SK-N-SH (cell line): ENCODE measurements at regions of chr17 and their contacts with region 1.

Region 1: DNA sequence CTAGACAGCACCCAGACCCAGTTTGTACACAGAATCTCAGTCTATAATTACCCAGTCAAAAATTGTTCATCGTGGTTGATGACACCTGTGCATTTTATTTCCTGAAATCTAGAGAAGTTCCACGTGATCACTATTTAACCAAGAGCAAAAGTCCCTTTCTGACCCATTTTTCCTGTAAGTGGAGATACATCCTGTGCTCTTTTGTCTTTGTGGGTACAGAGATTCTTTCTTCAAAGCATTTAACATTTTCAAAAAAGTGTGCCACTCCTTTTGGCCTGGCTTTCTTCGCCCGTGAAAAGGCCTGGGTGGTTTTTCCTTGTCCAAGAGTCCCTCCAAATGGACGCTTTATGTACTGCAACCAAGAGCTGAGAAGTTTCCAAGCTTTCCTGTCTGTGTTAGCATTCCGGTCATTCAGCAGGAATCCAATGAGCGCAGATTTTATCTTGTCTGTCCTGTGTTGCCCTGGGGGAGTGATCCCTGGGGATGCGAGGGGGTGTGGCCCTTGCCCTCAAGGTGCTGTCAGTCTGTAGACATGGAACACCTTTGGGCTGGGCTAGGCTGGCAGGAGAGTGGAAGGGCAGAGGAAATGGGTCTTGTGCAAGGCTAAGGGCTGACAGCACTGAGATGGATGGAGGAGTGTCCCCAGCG is 161.1 kb upstream of the CACNG5 start:
- DNase-seq: peak; percentile 70
- H3K4me3 ChIP-seq: no peak overlapping the region; a peak in 1 of 4 replicates
- H3K27ac ChIP-seq: peak overlapping the region; percentile 12 to 36; a peak in 3 of 4 replicates
- H3K4me1 ChIP-seq: peaks cover 3 to 15% of the 10 kb centered on the region in 2 experiments; a peak in 2 of 4 replicates
- H3K27me3 ChIP-seq: no peaks in the 10 kb centered on the region
- CTCF ChIP-seq: peak; percentile 90
- EP300 ChIP-seq: 0 out of 4 replicates have a peak, but pooled peaks of 1 of the 2 experiments have one; percentile 21
- RAD21 ChIP-seq: peak; percentile 99

Region 2: DNA sequence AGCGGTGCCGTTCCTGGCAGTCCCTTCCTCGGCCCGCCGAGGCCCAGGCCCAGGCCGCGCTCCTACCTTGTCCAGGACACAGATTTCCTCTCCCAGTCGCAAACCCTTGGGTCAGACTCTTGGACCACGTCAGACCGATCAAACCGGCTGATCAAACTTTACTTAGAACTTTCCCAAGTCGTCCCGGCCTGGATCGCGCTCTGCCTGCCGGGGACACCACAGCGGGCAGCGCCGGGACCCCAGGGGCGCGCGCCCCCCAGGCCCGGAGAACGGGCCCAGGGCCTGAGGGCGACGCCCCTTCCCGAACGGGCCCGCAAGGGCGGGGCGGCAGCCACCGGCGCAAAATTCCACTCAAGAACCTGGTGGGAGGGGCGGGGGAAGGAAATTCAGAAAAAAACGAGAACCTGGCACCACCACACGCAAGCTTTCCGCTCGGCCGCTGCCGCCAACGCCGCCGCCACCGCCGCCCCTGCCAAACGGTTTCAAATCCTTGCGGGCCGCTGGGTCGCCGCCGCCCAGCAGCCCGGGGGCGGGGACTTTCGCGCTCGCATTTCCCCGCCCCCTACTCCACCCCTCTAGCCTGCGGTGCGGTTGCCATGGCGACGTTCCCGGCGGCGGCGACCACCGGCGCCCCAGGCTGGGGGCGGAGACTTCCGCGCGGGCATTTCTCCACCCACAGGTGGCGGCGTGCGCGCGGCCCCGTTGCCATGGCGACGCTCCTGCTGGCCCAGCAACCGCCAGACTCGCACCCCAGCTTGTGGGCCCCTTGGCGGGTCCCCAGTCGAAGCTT is 482.0 kb before region 1 on chr17 and contains the start of gene CEP112:
- CTCF ChIA-PET with region 1: interaction called, 11 read pairs
- POLR2A ChIA-PET with region 1: no interaction called
- DNase-seq: peak; percentile 97
- H3K4me3 ChIP-seq: peak within 1 kb of the TSS; percentile 68 to 85
- H3K27ac ChIP-seq: peak within 1 kb of the TSS; percentile 51 to 66
- H3K4me1 ChIP-seq: peaks cover 7 to 8% of the 10 kb centered on the region in 2 experiments; a peak in 3 of 4 replicates
- H3K27me3 ChIP-seq: no peaks in the 10 kb centered on the region
- CTCF ChIP-seq: no peak
- EP300 ChIP-seq: no peak; a peak in 1 of 4 replicates
- RAD21 ChIP-seq: no peak
- polyA plus RNA-seq, gene CEP112: 7.9 and 10.6 TPM in 2 replicates

Region 3: GRCh38 chr17:66214884-66215528 is 458.8 kb before region 1 on chr17:
- CTCF ChIA-PET with region 1: interaction called, 11 read pairs
- POLR2A ChIA-PET with region 1: no interaction called
- DNase-seq: no peak
- H3K4me3 ChIP-seq: no peak overlapping the region
- H3K27ac ChIP-seq: no peak overlapping the region
- H3K4me1 ChIP-seq: no peaks in the 10 kb centered on the region
- H3K27me3 ChIP-seq: peaks cover 2% of the 10 kb centered on the region; the same call in 1 of the 2 replicates
- CTCF ChIP-seq: no peak
- EP300 ChIP-seq: no peak
- RAD21 ChIP-seq: no peak

Region 4: GRCh38 chr17:66260275-66260674 is 413.5 kb before region 1 on chr17:
- CTCF ChIA-PET with region 1: interaction called, 29 read pairs
- POLR2A ChIA-PET with region 1: no interaction called
- DNase-seq: no peak
- H3K4me3 ChIP-seq: no peak overlapping the region
- H3K27ac ChIP-seq: no peak overlapping the region
- H3K4me1 ChIP-seq: peaks cover 0 to 6% of the 10 kb centered on the region in 2 experiments; a peak in 3 of 4 replicates
- H3K27me3 ChIP-seq: no peaks in the 10 kb centered on the region
- CTCF ChIP-seq: no peak
- EP300 ChIP-seq: no peak
- RAD21 ChIP-seq: no peak

Region 5: DNA sequence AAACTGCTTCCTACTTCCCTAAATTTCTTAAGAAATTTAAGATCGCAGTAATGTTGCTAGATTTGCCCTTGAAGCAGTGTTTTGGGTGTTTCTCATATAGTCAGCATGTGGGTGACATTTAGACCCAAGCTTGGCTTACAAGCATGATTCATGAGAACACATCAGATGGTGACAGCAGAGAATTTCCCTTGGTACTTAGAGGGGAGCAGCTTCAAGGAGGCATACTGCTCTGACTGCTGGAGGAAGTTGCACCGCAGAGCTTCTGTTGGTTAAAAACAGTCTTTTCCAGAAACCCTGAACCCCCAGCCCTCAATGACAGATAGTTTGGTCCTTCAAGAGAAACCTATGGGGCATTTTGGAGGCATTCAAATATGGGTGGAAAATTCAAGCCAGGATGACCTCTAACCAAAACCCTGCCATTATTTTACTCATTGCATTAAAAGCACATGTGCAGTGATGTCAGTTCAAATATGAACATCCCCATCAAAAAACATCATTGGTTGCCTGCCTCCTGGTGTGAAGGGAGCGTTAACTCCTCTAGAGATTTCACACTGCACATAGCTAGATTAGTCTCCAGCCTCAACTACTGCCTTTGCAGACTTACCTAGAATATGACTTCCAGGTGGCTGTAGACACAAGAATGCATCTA is 40.4 kb before region 1 on chr17:
- CTCF ChIA-PET with region 1: interaction called, 90 read pairs
- POLR2A ChIA-PET with region 1: no interaction called
- DNase-seq: no peak
- H3K4me3 ChIP-seq: no peak overlapping the region
- H3K27ac ChIP-seq: no peak overlapping the region
- H3K4me1 ChIP-seq: peaks cover 6 to 11% of the 10 kb centered on the region in 2 experiments
- H3K27me3 ChIP-seq: no peaks in the 10 kb centered on the region
- CTCF ChIP-seq: no peak
- EP300 ChIP-seq: no peak
- RAD21 ChIP-seq: no peak

Region 6: GRCh38 chr17:66655861-66656260 is 17.9 kb before region 1 on chr17:
- CTCF ChIA-PET with region 1: interaction called, 16 read pairs
- POLR2A ChIA-PET with region 1: no interaction called
- DNase-seq: no peak
- H3K4me3 ChIP-seq: no peak overlapping the region
- H3K27ac ChIP-seq: peak overlapping the region in 1 of 2 experiments; percentile 1; a peak in 1 of 4 replicates
- H3K4me1 ChIP-seq: peaks cover 14 to 16% of the 10 kb centered on the region in 2 experiments; a peak in 2 of 4 replicates
- H3K27me3 ChIP-seq: no peaks in the 10 kb centered on the region
- CTCF ChIP-seq: no peak
- EP300 ChIP-seq: no peak
- RAD21 ChIP-seq: no peak

Region 7: GRCh38 chr17:66689221-66689620 is 15.4 kb after region 1 on chr17:
- CTCF ChIA-PET with region 1: interaction called, 42 read pairs
- POLR2A ChIA-PET with region 1: no interaction called
- DNase-seq: no peak
- H3K4me3 ChIP-seq: no peak overlapping the region
- H3K27ac ChIP-seq: no peak overlapping the region
- H3K4me1 ChIP-seq: peaks cover 0 to 16% of the 10 kb centered on the region in 2 experiments; a peak in 2 of 4 replicates
- H3K27me3 ChIP-seq: no peaks in the 10 kb centered on the region
- CTCF ChIP-seq: no peak
- EP300 ChIP-seq: no peak
- RAD21 ChIP-seq: no peak

Region 8: GRCh38 chr17:67200720-67201301 is 527.0 kb after region 1 on chr17:
- CTCF ChIA-PET with region 1: no interaction called
- POLR2A ChIA-PET with region 1: no interaction called
- DNase-seq: peak; percentile 55
- H3K4me3 ChIP-seq: peak overlapping the region in 1 of 2 experiments; percentile 15; a peak in 1 of 4 replicates
- H3K27ac ChIP-seq: no peak overlapping the region
- H3K4me1 ChIP-seq: peaks cover 0 to 8% of the 10 kb centered on the region in 2 experiments; a peak in 3 of 4 replicates
- H3K27me3 ChIP-seq: no peaks in the 10 kb centered on the region
- CTCF ChIP-seq: peak; percentile 66
- EP300 ChIP-seq: no peak
- RAD21 ChIP-seq: peak; percentile 22; the same call in 1 of the 2 replicates